GM12878 (cell line): ENCODE measurements at regions of chr11 and their contacts with region 1.

Region 1: DNA sequence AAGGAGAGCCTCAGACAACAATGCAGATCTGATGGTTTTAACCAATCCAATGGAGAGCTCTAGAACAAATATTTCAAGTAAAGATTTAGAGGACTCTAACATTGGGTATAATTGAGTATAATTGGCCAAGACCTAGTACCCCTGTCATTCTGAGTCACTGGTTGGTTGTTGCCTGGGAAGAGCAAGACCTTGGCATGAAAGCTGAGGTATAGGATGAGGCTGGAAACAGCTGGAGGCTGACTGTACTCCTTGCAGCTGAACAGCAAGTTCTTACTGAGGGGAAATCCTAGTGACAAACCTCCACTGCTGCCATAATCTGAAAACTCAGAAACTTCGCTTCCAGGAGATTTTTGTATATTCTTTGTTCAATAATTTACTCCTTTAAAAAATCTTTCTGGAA is 54.3 kb upstream of the MUC15 start:
- DNase-seq: no peak
- ATAC-seq: no peak; the same call in 2 of the 3 replicates
- H3K4me3 ChIP-seq: no peak overlapping the region
- H3K27ac ChIP-seq: no peak overlapping the region
- H3K4me1 ChIP-seq: no peaks in the 10 kb centered on the region
- H3K27me3 ChIP-seq: no peaks in the 10 kb centered on the region
- CTCF ChIP-seq: no peak
- EP300 ChIP-seq: no peak
- POLR2A ChIP-seq: no peak
- RAD21 ChIP-seq: no peak

Region 2: GRCh38 chr11:26344647-26345046 is 281.7 kb before region 1 on chr11:
- CTCF ChIA-PET with region 1: no interaction called
- POLR2A ChIA-PET with region 1: no interaction called
- RAD21 ChIA-PET with region 1: no interaction called
- SMC1A ChIA-PET with region 1: no interaction called
- in situ Hi-C with region 1: no loop called
- intact Hi-C with region 1: no loop called
- DNase-seq: no peak
- ATAC-seq: no peak
- H3K4me3 ChIP-seq: no peak overlapping the region
- H3K27ac ChIP-seq: no peak overlapping the region
- H3K4me1 ChIP-seq: no peaks in the 10 kb centered on the region
- H3K27me3 ChIP-seq: 0 out of 4 replicates have a peak, but pooled peaks cover 0 to 2% of the 10 kb centered on the region in 2 experiments
- CTCF ChIP-seq: no peak
- EP300 ChIP-seq: no peak
- POLR2A ChIP-seq: no peak
- RAD21 ChIP-seq: no peak

Region 3: GRCh38 chr11:26608507-26609146 is 17.7 kb before region 1 on chr11:
- CTCF ChIA-PET with region 1: interaction called, 6 read pairs
- POLR2A ChIA-PET with region 1: interaction called, 17 read pairs
- RAD21 ChIA-PET with region 1: interaction called, 14 read pairs
- SMC1A ChIA-PET with region 1: interaction called, 63 read pairs
- in situ Hi-C with region 1: no loop called
- intact Hi-C with region 1: no loop called
- DNase-seq: no peak
- ATAC-seq: peak; percentile 66
- H3K4me3 ChIP-seq: no peak overlapping the region
- H3K27ac ChIP-seq: peak overlapping the region; percentile 58
- H3K4me1 ChIP-seq: peaks cover 4% of the 10 kb centered on the region; the same call in 1 of the 2 replicates
- H3K27me3 ChIP-seq: no peaks in the 10 kb centered on the region
- CTCF ChIP-seq: no peak
- EP300 ChIP-seq: no peak
- POLR2A ChIP-seq: no peak
- RAD21 ChIP-seq: no peak

Region 4: DNA sequence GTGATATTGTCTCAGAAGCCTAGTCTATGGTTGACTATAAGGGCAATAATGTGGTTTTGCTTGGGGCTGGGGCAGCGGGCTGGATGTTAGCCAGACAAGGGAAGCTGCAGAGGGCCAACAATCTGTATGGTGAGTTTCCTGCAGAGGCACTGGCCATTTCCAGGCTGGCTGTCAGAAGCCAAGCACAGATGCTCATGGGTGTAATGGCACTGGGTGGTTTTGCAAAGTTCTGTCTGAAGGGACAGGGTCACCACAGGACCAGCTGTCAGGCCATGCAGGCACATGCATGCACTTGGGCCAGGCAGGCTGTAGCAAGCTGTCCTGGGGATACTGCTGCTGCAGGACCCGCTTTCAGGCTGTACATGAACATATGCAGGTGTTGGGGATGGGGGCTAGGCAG is 12.6 kb before region 1 on chr11:
- CTCF ChIA-PET with region 1: interaction called, 3 read pairs
- POLR2A ChIA-PET with region 1: interaction called, 17 read pairs
- RAD21 ChIA-PET with region 1: interaction called, 14 read pairs
- SMC1A ChIA-PET with region 1: interaction called, 63 read pairs
- in situ Hi-C with region 1: no loop called
- intact Hi-C with region 1: no loop called
- DNase-seq: no peak
- ATAC-seq: peak; percentile 8; the same call in 2 of the 3 replicates
- H3K4me3 ChIP-seq: no peak overlapping the region
- H3K27ac ChIP-seq: no peak overlapping the region
- H3K4me1 ChIP-seq: no peaks in the 10 kb centered on the region; the same call in 1 of the 2 replicates
- H3K27me3 ChIP-seq: no peaks in the 10 kb centered on the region
- CTCF ChIP-seq: no peak
- EP300 ChIP-seq: no peak
- POLR2A ChIP-seq: no peak
- RAD21 ChIP-seq: no peak

Region 5: GRCh38 chr11:27020751-27021150 is 394.4 kb after region 1 on chr11:
- CTCF ChIA-PET with region 1: no interaction called
- POLR2A ChIA-PET with region 1: no interaction called
- RAD21 ChIA-PET with region 1: no interaction called
- SMC1A ChIA-PET with region 1: no interaction called
- in situ Hi-C with region 1: no loop called
- intact Hi-C with region 1: no loop called
- DNase-seq: no peak
- ATAC-seq: no peak
- H3K4me3 ChIP-seq: no peak overlapping the region
- H3K27ac ChIP-seq: no peak overlapping the region
- H3K4me1 ChIP-seq: no peaks in the 10 kb centered on the region
- H3K27me3 ChIP-seq: no peaks in the 10 kb centered on the region
- CTCF ChIP-seq: no peak
- EP300 ChIP-seq: no peak
- POLR2A ChIP-seq: no peak
- RAD21 ChIP-seq: no peak